ENCODE measurements at regions of chr17 and their contacts with region 1.

Region 1: GRCh38 chr17:77068915-77069314 is 71.9 kb upstream of the SEC14L1 start:
- DNase-seq: no peak
- H3K4me3 Mint-ChIP-seq: no peak overlapping the region
- H3K27ac Mint-ChIP-seq: no peak overlapping the region
- H3K4me1 Mint-ChIP-seq: no peaks in the 10 kb centered on the region
- H3K27me3 Mint-ChIP-seq: peaks cover 26% of the 10 kb centered on the region

Region 2: DNA sequence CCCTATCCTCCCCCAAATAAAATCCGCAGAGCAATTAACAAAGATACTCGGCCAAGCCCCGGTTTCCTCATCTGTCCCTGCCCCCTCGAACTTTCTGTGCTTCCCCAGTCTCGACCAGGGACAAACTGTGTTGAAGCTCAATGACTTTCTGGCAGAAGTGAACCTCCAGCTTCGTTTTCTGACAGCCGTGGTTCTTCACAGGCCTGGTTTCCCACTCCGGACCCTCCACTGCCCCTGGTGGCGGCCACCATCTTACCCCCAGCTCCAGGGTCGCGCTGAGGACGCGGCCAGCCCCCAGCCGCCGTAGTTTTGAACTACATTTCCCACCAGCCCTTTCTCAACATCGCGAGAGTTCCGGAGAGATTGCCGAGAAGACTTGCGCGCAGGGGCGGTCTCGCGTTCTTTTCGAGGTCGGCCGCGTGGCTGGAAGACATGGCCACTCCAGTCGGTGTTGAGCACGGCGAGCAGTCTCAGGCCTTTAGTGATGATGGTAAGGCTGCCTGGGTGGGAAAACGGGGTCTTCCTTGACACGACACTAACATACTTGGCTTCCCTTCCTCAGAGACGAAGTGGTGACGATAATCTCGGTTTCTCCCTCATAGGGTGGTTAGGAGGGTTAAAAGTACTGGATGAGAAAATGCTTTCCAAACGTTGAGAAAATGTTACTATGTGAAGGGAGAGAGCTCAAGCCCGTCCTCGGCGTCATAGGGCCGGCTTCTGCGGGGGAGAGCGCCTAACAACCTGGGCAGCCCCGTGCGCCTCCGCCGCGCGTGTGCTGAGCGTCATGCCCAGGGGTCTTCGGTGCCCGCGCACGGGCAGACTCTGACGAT is 511.3 kb before region 1 on chr17:
- CTCF ChIA-PET with region 1: no interaction called
- POLR2A ChIA-PET with region 1: no interaction called
- DNase-seq: peak; percentile 95
- H3K4me3 Mint-ChIP-seq: peak overlapping the region; percentile 99
- H3K27ac Mint-ChIP-seq: peak overlapping the region; percentile 91
- H3K4me1 Mint-ChIP-seq: peaks cover 63% of the 10 kb centered on the region
- H3K27me3 Mint-ChIP-seq: no peaks in the 10 kb centered on the region

Region 3: DNA sequence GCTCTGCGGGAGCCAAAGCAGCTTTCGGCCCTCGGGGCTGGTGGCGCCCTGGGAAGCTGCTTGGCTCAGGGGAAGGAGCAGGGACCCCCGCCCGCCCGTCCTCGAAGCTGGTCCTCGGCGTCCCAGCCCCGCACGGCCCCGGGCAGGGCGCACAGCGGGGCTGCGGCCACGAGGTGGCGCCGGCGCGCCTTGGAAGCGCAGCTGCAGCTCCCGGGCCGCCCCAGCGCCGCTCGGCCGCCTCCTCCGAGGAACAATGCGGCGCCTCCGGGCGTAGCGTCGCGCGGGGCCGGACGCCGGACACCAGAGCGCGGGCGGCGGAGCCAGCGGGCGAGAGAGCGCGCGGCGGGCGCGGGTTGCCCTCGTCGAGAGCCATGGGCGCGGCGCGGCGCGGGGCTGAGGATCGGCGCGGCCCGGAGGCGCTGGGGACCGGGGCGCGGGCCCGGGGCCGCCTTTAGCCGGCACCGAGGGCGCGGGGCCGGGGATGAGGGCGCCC is 200.7 kb before region 1 on chr17 and contains the start of gene MGAT5B:
- CTCF ChIA-PET with region 1: interaction called, 13 read pairs
- POLR2A ChIA-PET with region 1: no interaction called
- DNase-seq: peak; percentile 76
- H3K4me3 Mint-ChIP-seq: peak within 1 kb of the TSS; percentile 57
- H3K27ac Mint-ChIP-seq: peak within 1 kb of the TSS; percentile 54
- H3K4me1 Mint-ChIP-seq: peaks cover 13% of the 10 kb centered on the region
- H3K27me3 Mint-ChIP-seq: peaks cover 33% of the 10 kb centered on the region
- total RNA-seq, gene MGAT5B: 0.08 to 0.13 TPM

Region 4: DNA sequence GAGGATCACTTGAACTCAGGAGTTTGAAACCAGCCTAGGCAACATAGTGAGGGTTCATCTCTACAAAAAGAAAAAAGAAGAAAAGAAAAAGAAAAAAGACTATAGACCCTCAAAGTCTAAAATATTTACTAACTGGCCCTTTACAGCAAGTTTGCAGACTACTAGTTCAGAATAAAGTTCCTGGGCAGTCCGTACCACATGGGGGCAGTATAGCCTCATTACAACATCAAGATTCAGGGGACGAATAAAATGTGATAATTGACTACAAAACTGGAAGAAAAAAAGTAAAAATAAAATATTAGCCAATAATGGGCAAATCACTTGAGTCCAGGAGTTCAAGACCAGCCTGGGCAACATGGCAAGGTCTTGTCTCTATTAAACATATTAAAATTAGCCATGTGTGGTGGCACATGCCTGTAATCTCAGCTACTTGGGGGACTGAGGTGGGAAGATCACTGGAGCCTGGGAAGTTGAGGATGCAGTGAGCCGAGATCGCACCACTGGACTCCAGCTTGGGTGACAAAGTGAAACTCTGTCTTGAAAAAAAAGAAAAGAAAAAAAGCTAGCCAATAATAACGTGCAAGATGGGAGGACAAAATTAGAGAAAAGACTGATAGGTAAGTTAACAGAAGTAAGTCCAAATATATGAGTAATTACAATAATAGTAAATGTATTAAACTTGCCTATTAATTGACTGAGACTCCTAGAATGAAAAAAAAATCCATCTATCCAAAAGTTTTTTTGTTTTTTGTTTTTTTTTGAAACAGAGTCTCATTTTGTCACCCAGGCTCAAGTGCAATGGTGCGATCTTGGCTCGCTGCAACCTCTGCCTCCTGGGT is 57.5 kb before region 1 on chr17:
- CTCF ChIA-PET with region 1: interaction called, 10 read pairs
- POLR2A ChIA-PET with region 1: no interaction called
- DNase-seq: peak; percentile 62
- H3K4me3 Mint-ChIP-seq: no peak overlapping the region
- H3K27ac Mint-ChIP-seq: no peak overlapping the region
- H3K4me1 Mint-ChIP-seq: no peaks in the 10 kb centered on the region
- H3K27me3 Mint-ChIP-seq: peaks cover 13% of the 10 kb centered on the region

Region 5: GRCh38 chr17:77054936-77055335 is 14.0 kb before region 1 on chr17:
- CTCF ChIA-PET with region 1: interaction called, 13 read pairs
- POLR2A ChIA-PET with region 1: interaction called, 3 read pairs
- DNase-seq: no peak
- H3K4me3 Mint-ChIP-seq: no peak overlapping the region
- H3K27ac Mint-ChIP-seq: no peak overlapping the region
- H3K4me1 Mint-ChIP-seq: no peaks in the 10 kb centered on the region
- H3K27me3 Mint-ChIP-seq: no peaks in the 10 kb centered on the region

Region 6: GRCh38 chr17:77096570-77097214 is 27.8 kb after region 1 on chr17:
- CTCF ChIA-PET with region 1: no interaction called
- POLR2A ChIA-PET with region 1: no interaction called
- DNase-seq: no peak
- H3K4me3 Mint-ChIP-seq: no peak overlapping the region
- H3K27ac Mint-ChIP-seq: peak overlapping the region; percentile 67
- H3K4me1 Mint-ChIP-seq: peaks cover 28% of the 10 kb centered on the region
- H3K27me3 Mint-ChIP-seq: no peaks in the 10 kb centered on the region

Measured in activated CD4-positive, alpha-beta memory T cell treated with anti-CD3 and anti-CD28 coated beads, Interleukin-2, amount 10 ng/mL, durations not matched to agents 7 days and 5 days (primary cell).